Left cardiac atrium (tissue), 4 donors: ENCODE measurements at regions of chr11 and their contacts with region 1.

Region 1: DNA sequence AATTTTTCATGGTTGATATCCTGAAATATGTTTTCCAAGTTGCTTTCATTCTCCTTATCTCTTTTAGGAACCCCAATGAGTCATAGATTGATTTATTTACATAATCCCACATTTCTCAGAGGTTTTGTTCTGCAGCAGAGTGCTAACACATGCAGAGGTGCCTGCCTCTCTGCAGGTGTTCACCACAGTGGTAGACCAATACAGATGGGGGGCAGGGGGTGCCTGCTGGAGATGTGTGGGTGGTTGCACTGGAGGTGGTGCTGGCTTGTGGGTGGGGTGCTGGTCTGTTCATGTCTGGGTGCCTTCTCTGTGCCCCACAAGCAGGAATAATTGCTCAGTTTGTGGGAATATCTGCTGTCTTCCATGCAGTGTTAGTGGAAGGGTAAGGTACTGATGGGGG is 131.1 kb downstream of the JRKL start:
- DNase-seq: no peak
- ATAC-seq: no peak

Region 2: DNA sequence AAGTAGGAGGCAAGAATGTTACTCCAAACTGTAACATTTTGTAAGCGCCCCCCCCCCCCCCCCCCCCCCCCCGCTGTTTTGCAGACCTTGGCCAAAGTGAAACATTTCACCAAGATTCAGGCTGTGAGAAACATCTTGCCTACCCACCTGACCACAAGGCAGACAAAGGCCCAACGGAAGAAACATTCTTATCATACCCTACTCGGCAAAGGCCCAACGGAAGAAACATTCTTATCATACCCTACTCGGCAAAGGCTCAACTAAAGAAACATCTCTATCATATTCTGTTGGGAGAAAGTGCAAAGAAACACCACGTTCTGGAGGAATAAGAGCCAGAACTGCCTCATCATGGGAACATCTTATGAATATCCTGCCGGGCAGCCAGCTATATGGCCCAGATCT is 14.0 kb before region 1 on chr11:
- intact Hi-C with region 1: loop called in 1 of 2 experiments (anchors 1 kb)
- DNase-seq: no peak
- ATAC-seq: no peak